GM10248 (cell line): ENCODE measurements at regions of chr11 and their contacts with region 1.

Region 1: GRCh38 chr11:101848262-101848661 is 66.5 kb upstream of the CEP126 start:
- DNase-seq: no peak
- CTCF ChIP-seq: peak; percentile 16

Region 2: GRCh38 chr11:101508370-101508769 is 339.9 kb before region 1 on chr11:
- CTCF ChIA-PET with region 1: no interaction called
- POLR2A ChIA-PET with region 1: no interaction called
- DNase-seq: no peak
- CTCF ChIP-seq: no peak

Region 3: DNA sequence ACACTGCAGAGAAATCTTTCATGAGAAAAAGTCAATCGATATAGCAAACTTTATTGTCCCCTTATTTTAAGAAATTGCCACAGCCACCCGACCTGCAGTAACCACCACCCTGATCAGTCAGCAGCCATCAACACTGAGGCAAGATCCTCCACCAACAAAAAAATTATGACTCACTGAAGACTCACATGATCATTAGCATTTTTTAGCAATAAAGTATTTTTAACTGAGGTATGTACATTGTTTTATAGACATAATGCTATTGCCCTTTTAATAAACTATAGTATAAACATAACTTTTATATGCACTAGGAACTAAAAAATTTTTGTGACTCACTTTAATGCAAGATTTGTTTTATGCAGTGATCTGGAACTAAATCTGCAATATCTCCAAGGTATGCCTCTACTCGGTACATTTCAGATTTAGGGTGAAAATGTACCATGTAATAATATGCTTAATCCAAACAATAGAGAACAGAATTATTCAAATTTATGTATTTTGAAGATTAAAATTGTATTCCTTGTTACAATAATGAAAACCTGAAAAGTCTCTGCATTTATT is 12.7 kb before region 1 on chr11:
- CTCF ChIA-PET with region 1: interaction called, 10 read pairs
- POLR2A ChIA-PET with region 1: no interaction called
- DNase-seq: no peak
- CTCF ChIP-seq: no peak

Region 4: GRCh38 chr11:101860696-101861427 is 12.6 kb after region 1 on chr11:
- CTCF ChIA-PET with region 1: interaction called, 10 read pairs
- POLR2A ChIA-PET with region 1: no interaction called
- DNase-seq: peak; percentile 28
- CTCF ChIP-seq: peak; percentile 71

Region 5: DNA sequence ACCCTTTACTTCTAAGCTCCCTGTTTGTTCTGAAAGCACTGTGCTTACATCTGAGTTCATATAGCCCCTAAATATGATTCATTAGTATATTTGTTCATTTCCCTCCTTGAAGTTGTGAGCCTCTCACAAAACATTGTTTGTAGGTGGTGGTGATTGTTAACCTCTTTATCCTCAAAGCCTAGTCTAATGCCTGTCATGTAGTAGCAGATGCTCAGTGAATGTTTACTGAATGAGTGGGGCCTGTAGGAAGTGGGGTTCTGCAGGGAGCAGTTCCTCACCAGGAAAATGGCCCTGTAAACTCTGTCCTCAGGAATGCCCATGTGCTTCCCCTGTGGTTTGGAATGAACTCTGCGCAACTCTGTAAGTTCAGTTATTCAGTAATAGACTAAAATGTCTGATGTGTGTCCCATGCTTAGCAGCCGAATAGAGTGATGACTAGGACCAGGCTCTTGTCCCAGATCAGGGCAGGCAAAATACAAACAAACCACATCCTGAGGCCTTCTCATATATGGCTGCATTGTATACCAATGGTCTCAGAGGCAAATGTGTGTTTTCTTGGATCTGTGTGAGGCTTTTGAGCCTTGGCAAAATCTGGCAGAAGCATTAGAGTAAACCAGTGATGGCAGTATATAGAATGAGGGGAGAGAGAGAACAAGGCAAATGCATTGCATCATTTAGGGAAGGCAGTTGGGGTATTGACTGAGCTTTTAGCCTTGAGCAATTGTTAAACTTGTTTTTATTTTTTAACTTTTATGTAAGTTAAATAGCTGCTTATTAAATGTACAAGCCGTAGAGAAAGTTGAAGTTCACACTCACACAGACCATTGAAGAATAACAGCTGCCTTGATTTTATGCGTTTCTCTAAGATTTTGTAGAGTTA is 377.7 kb after region 1 on chr11:
- CTCF ChIA-PET with region 1: no interaction called
- POLR2A ChIA-PET with region 1: no interaction called
- DNase-seq: no peak
- CTCF ChIP-seq: no peak